ENCODE measurements at regions of chr6 and their contacts with region 1.

Region 1: DNA sequence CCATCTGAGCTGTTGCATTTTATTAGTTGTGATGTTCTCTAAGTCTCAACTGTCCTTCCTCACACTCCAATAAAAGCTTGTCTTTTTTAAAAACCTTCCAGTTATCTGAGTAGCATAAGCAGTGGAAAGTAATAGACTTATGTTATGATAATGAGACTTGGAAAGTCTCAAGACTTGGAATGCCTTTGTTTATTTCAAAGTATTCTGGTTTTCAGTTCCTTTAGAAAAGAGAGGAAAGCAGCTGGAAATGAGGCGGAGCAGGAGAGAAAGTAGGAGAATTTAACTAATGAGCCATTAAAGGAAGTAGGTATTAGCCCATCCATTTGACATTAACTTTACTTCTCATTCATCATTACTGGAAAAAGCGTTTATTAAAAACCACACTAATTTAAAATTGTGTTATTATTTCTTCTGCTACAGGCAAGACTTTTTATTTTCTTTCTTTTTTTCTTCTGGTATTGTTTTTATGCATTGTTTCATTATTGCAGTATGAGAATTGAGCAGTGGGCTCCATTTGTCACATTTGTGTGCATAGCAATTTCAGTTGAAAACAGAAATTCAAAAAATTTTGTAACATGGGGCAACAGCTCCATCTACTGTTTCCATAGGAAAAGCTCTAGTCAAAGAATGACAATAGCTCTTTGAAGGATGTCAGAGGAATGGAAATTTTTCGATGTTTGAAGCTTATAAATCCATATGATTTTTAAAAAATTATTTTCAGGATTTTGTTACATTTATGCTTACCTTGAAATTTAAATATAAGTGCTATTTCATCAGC is 194.8 kb downstream of the COL9A1 start:
- DNase-seq: no peak
- H3K4me3 ChIP-seq: no peak overlapping the region
- H3K27ac ChIP-seq: no peak overlapping the region
- H3K4me1 ChIP-seq: no peaks in the 10 kb centered on the region
- H3K27me3 ChIP-seq: no peaks in the 10 kb centered on the region
- CTCF ChIP-seq: peak; percentile 41

Region 2: DNA sequence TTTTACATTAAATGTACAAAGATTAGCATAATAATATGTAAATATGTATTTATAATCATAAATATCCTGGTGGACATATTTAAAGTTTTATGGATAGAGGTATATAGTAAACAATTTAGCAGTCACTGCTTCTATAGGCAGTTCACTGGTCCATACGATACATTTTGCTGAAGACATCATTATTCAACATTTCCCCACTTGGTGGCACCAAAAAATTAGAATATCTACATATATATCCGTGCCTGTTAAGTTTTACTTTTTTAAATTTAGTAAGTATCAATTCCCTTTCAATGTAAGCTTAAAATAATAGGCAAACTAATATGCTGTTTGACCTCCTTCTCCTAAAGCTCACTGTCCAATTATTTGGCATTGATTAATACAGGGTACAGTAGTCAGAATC is 375.4 kb before region 1 on chr6:
- intact Hi-C with region 1: loop called (anchors 10 kb)
- DNase-seq: no peak
- H3K4me3 ChIP-seq: no peak overlapping the region
- H3K27ac ChIP-seq: no peak overlapping the region
- H3K4me1 ChIP-seq: no peaks in the 10 kb centered on the region
- H3K27me3 ChIP-seq: no peaks in the 10 kb centered on the region
- CTCF ChIP-seq: no peak

Region 3: GRCh38 chr6:69835414-69836179 is 272.4 kb before region 1 on chr6:
- intact Hi-C with region 1: loop called (anchors 10 kb)
- DNase-seq: no peak
- H3K4me3 ChIP-seq: no peak overlapping the region
- H3K27ac ChIP-seq: no peak overlapping the region
- H3K4me1 ChIP-seq: no peaks in the 10 kb centered on the region
- H3K27me3 ChIP-seq: no peaks in the 10 kb centered on the region
- CTCF ChIP-seq: peak; percentile 73

Region 4: DNA sequence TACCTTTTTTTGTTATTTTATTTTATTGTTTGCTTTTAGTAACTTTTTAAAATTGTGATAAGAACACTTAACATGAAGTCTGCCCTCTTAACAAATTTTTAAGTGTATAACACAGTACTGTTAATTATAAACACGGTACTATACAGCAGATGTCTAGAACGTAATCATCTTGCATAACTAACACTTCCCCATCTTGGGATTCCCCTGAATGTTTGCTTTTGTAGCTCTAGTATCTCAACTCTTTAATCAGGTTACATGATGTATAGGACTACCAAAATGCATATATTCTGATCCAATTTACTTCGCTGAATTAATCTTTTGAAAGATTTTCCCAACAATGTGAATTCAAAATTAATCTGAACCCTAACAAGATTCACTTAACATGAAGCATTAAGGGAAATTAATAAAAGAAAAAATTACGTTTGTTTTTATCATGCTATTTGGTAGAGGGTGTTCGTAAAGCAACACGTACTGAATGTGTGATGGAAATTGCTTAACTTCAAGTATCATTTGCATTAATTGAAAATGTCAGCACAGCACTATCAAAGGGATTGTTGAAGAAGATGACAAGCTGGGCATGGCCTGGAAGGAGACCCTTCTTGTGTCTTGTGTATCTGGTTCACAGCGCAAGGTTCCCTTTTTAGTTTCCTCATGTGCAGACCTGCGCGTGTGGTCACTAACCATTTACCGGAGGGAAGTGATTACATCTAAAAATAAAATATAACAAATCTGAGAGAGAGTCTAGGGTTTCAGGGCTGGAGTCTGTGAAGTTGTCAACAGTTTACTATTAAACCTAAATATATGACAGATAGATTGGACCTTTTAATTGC is 226.5 kb before region 1 on chr6:
- intact Hi-C with region 1: no loop called
- DNase-seq: no peak
- H3K4me3 ChIP-seq: no peak overlapping the region
- H3K27ac ChIP-seq: no peak overlapping the region
- H3K4me1 ChIP-seq: no peaks in the 10 kb centered on the region
- H3K27me3 ChIP-seq: no peaks in the 10 kb centered on the region
- CTCF ChIP-seq: no peak

Region 5: GRCh38 chr6:70636589-70636988 is 528.5 kb after region 1 on chr6:
- intact Hi-C with region 1: no loop called
- DNase-seq: no peak
- H3K4me3 ChIP-seq: no peak overlapping the region
- H3K27ac ChIP-seq: no peak overlapping the region
- H3K4me1 ChIP-seq: no peaks in the 10 kb centered on the region
- H3K27me3 ChIP-seq: no peaks in the 10 kb centered on the region
- CTCF ChIP-seq: no peak

Region 6: GRCh38 chr6:70834520-70834919 is 726.5 kb after region 1 on chr6:
- intact Hi-C with region 1: no loop called
- DNase-seq: no peak
- H3K4me3 ChIP-seq: no peak overlapping the region
- H3K27ac ChIP-seq: no peak overlapping the region
- H3K4me1 ChIP-seq: no peaks in the 10 kb centered on the region
- H3K27me3 ChIP-seq: no peaks in the 10 kb centered on the region
- CTCF ChIP-seq: no peak

Measured in colonic mucosa (tissue), 4 donors.